PC-9 (cell line): ENCODE measurements at regions of chr3 and their contacts with region 1.

Region 1: GRCh38 chr3:100269410-100270217 is 8.8 kb downstream of the TBC1D23 start:
- DNase-seq: peak; percentile 50 to 96
- H3K4me3 ChIP-seq: peak overlapping the region; percentile 3; the same call in 1 of the 2 replicates
- H3K27ac ChIP-seq: peak overlapping the region; percentile 58
- H3K4me1 ChIP-seq: peaks cover 43% of the 10 kb centered on the region
- H3K27me3 ChIP-seq: no peaks in the 10 kb centered on the region
- CTCF ChIP-seq: no peak

Region 2: DNA sequence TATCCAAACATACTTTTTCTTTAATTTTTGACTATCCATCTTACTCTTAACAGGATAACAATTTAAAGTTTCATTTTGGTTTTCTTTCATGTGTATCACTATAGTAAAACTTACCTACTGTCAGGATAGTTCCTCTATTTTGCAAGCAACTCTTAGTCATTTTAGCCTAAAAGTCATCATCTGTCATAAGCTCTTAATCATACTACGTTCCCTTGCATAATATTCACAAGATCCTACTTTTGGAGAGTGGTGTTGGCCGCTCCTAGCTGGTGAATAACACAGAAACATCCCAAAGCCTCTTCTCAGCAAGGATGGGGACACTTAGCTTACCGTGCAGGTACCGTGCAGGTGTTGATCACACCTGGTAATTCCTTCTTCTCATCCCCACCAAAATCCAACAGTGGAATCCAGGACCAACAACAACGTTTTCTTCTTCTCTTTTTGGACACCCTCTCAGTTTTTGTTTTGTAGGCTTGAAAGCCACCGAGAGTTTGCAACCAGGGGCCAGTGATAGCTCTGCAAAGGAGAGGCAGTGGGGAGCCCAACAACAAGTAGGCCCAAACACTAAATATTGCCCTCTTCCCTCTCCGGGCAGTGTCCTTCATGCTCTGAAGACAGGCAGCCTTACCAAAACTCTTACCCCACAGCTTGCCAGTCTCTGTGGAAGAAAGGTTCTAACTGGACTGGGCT is 155.7 kb before region 1 on chr3:
- CTCF ChIA-PET with region 1: no interaction called
- POLR2A ChIA-PET with region 1: no interaction called
- intact Hi-C with region 1: no loop called
- DNase-seq: peak in 1 of 2 experiments; percentile 51
- H3K4me3 ChIP-seq: no peak overlapping the region
- H3K27ac ChIP-seq: no peak overlapping the region
- H3K4me1 ChIP-seq: peaks cover 30% of the 10 kb centered on the region
- H3K27me3 ChIP-seq: no peaks in the 10 kb centered on the region
- CTCF ChIP-seq: no peak

Region 3: GRCh38 chr3:100412912-100413590 is 143.4 kb after region 1 on chr3:
- CTCF ChIA-PET with region 1: no interaction called
- POLR2A ChIA-PET with region 1: interaction called, 14 read pairs
- intact Hi-C with region 1: no loop called
- DNase-seq: no peak
- H3K4me3 ChIP-seq: no peak overlapping the region
- H3K27ac ChIP-seq: no peak overlapping the region
- H3K4me1 ChIP-seq: no peaks in the 10 kb centered on the region
- H3K27me3 ChIP-seq: no peaks in the 10 kb centered on the region
- CTCF ChIP-seq: no peak

Region 4: GRCh38 chr3:101351829-101352228 is 1082.2 kb after region 1 on chr3:
- CTCF ChIA-PET with region 1: no interaction called
- POLR2A ChIA-PET with region 1: interaction called, 10 read pairs
- intact Hi-C with region 1: no loop called
- DNase-seq: no peak
- H3K4me3 ChIP-seq: no peak overlapping the region
- H3K27ac ChIP-seq: no peak overlapping the region
- H3K4me1 ChIP-seq: no peaks in the 10 kb centered on the region
- H3K27me3 ChIP-seq: no peaks in the 10 kb centered on the region
- CTCF ChIP-seq: no peak